B cell (primary cell): ENCODE measurements at regions of chr6 and their contacts with region 1.

Region 1: DNA sequence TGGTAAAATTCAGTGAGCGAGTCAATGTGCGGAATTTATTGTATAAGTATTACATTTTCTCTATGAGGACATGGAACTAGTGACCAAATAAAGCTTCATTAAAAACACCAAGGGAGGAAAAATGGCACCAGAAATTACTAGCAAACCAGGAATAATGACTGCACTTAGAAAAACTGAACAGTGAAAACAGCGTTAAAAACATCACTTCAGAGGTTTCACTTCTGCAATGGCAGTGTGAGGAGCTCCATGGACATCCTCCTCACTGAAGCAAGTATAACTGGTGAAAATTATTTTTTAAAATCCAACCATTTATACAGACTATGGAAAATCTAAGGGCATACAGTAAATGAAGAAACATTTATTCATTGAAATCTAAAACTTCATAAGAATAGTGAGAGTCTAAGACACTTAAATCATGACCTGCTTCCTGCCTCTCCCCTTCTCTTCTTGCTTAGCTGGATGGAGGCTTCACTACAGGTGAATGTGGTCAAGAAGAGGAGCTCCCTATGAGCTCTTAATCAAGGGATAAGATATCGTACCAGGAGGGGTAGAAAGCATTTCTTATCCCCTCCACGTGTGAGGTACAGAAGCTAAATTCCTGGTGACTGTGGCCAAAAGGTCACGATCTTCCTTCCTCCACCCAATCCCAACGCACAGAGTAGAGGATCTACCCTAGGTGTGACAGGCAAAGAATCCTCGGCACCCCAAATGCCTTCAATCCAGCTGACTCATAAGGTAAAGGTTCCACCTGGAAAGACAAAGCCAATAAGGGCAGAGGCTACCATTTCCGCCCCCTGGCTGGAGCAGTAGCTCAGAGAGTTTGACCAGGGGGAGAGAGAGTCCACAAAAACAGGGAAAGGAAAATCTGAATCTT is 12.3 kb upstream of the ASF1A start:
- DNase-seq: peak; percentile 55
- ATAC-seq: peak; percentile 68
- H3K4me3 ChIP-seq: peak overlapping the region in 1 of 5 experiments; percentile 10
- H3K4me3 Mint-ChIP-seq: peak overlapping the region; percentile 42
- H3K27ac ChIP-seq: peak overlapping the region in 1 of 2 donors; percentile 61
- H3K27ac Mint-ChIP-seq: peak overlapping the region; percentile 86
- H3K4me1 ChIP-seq: peaks cover 20 to 24% of the 10 kb centered on the region in 2 donors
- H3K4me1 Mint-ChIP-seq: peaks cover 55% of the 10 kb centered on the region
- H3K27me3 ChIP-seq: no peaks in the 10 kb centered on the region
- H3K27me3 Mint-ChIP-seq: no peaks in the 10 kb centered on the region
- CTCF ChIP-seq: no peak

Region 2: GRCh38 chr6:117265410-117266256 is 1616.0 kb before region 1 on chr6 and contains the start of gene VGLL2:
- CTCF ChIA-PET with region 1: no interaction called
- POLR2A ChIA-PET with region 1: no interaction called
- intact Hi-C with region 1: no loop called
- DNase-seq: peak; percentile 15
- ATAC-seq: no peak
- H3K4me3 ChIP-seq: peak within 1 kb of the TSS in 1 of 5 experiments; percentile 16
- H3K4me3 Mint-ChIP-seq: peak within 1 kb of the TSS; percentile 69
- H3K27ac ChIP-seq: no peak within 1 kb of the TSS
- H3K27ac Mint-ChIP-seq: no peak within 1 kb of the TSS
- H3K4me1 ChIP-seq: peaks cover 14 to 18% of the 10 kb centered on the region in 2 donors
- H3K4me1 Mint-ChIP-seq: peaks cover 16% of the 10 kb centered on the region
- H3K27me3 ChIP-seq: peaks cover 0 to 71% (median 50%) of the 10 kb centered on the region in 4 experiments
- H3K27me3 Mint-ChIP-seq: peaks cover 74% of the 10 kb centered on the region
- CTCF ChIP-seq: no peak
- total RNA-seq, gene VGLL2: not detected in 2 replicates

Region 3: DNA sequence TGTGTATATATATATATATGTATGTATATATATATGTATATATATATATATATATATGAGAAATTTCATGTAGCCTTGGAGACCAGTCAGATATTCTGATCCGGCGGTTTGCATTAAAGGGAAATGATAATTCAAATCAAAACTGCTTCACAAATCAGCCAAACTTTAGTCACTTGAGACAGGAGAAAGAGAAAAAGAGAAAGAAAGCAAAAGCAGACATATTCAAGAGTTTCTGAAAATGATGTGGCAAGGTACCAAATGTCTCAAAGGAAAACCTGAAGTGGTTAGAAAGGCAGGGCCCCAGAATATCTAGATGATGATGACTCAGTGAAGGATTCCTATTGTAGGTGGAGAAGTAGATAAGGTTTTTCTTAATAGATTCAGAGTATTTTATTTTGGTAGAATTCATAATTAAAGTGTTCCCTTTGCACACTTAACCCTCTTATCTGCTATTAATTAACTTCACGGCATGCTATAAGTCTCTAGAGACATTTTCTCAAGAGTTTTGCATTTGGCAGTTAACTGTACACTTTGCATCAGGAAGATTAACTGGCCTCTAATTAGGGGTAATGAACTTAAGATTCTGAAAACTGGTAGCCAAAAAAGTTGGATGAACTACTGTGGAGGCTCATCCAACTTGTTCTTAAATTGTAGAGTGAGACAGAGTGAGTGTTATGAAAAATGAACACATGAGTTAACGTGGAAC is 37.8 kb before region 1 on chr6:
- CTCF ChIA-PET with region 1: no interaction called
- POLR2A ChIA-PET with region 1: no interaction called
- intact Hi-C with region 1: loop called (anchors 5 kb)
- DNase-seq: no peak
- ATAC-seq: no peak
- H3K4me3 ChIP-seq: no peak overlapping the region
- H3K4me3 Mint-ChIP-seq: no peak overlapping the region
- H3K27ac ChIP-seq: no peak overlapping the region
- H3K27ac Mint-ChIP-seq: no peak overlapping the region
- H3K4me1 ChIP-seq: no peaks in the 10 kb centered on the region
- H3K4me1 Mint-ChIP-seq: peaks cover 24% of the 10 kb centered on the region
- H3K27me3 ChIP-seq: no peaks in the 10 kb centered on the region
- H3K27me3 Mint-ChIP-seq: no peaks in the 10 kb centered on the region
- CTCF ChIP-seq: no peak

Region 4: DNA sequence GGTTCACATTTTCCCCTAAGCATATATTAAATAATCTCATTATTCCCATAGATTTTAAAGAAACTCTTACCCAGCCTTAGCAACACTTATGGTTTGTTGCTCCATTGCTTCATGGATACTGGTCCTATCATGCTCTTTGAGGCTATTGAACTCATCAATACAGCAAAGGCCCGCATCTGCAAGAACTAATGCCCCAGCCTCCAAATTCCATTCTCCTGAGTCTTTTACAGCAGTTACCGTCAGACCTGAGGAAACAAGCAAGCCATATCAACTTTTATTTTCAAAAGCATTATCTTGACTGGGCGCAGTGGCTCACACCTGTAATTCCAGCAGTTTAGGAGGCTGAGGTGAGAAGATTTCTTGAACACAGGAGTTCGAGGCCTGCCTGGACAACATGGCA is 25.4 kb before region 1 on chr6:
- CTCF ChIA-PET with region 1: no interaction called
- POLR2A ChIA-PET with region 1: no interaction called
- intact Hi-C with region 1: no loop called
- DNase-seq: no peak
- ATAC-seq: no peak
- H3K4me3 ChIP-seq: no peak overlapping the region
- H3K4me3 Mint-ChIP-seq: no peak overlapping the region
- H3K27ac ChIP-seq: no peak overlapping the region
- H3K27ac Mint-ChIP-seq: no peak overlapping the region
- H3K4me1 ChIP-seq: peaks cover 0 to 3% of the 10 kb centered on the region in 2 donors
- H3K4me1 Mint-ChIP-seq: peaks cover 26% of the 10 kb centered on the region
- H3K27me3 ChIP-seq: no peaks in the 10 kb centered on the region
- H3K27me3 Mint-ChIP-seq: no peaks in the 10 kb centered on the region
- CTCF ChIP-seq: no peak

Region 5: DNA sequence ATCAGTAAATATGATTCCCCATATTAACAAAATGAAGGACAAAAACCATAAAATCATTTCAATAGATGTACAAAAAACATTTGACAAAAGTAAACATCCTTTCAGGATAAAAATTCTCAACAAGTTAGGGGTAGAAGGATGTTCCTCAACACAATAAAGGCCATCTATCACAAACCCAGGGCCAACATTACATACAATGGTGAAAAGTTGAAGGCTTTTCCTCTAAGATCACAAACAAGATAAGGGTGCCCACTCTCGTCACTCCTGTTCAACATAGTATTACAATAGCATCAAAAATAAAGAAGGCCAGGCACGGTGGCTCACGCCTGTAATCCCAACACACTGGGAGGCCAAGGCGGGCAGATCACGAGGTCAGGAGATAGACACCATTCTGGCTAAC is 10.3 kb before region 1 on chr6:
- CTCF ChIA-PET with region 1: no interaction called
- POLR2A ChIA-PET with region 1: no interaction called
- intact Hi-C with region 1: no loop called
- DNase-seq: no peak
- ATAC-seq: no peak
- H3K4me3 ChIP-seq: no peak overlapping the region
- H3K4me3 Mint-ChIP-seq: no peak overlapping the region
- H3K27ac ChIP-seq: no peak overlapping the region
- H3K27ac Mint-ChIP-seq: no peak overlapping the region
- H3K4me1 ChIP-seq: no peaks in the 10 kb centered on the region
- H3K4me1 Mint-ChIP-seq: peaks cover 36% of the 10 kb centered on the region
- H3K27me3 ChIP-seq: no peaks in the 10 kb centered on the region
- H3K27me3 Mint-ChIP-seq: no peaks in the 10 kb centered on the region
- CTCF ChIP-seq: no peak

Region 6: DNA sequence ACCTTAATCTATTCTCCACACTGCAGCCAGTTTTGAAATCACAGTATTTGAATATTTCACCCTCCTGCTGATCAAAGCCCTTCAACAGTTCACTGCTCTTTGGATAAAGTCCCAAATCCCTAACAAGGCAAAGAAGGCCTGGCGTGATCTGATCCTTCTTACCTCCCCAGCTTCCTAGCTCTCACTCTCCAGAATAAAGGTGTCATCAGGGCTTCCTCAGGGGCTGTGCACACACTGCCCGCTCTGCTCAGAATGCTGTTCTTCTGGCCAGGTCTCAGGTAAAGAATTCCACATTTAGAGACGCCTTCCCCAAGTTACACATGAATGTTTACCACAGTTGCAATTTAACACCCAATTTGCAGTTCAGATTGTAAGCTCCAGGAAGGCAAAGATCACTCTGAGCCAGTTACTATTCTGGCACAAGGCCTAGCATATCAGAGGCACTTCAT is 112.2 kb after region 1 on chr6:
- CTCF ChIA-PET with region 1: no interaction called
- POLR2A ChIA-PET with region 1: no interaction called
- intact Hi-C with region 1: no loop called
- DNase-seq: no peak
- ATAC-seq: no peak
- H3K4me3 ChIP-seq: no peak overlapping the region
- H3K4me3 Mint-ChIP-seq: no peak overlapping the region
- H3K27ac ChIP-seq: no peak overlapping the region
- H3K27ac Mint-ChIP-seq: no peak overlapping the region
- H3K4me1 ChIP-seq: no peaks in the 10 kb centered on the region
- H3K4me1 Mint-ChIP-seq: no peaks in the 10 kb centered on the region
- H3K27me3 ChIP-seq: peaks cover 0 to 3% (median 0%) of the 10 kb centered on the region in 4 experiments
- H3K27me3 Mint-ChIP-seq: no peaks in the 10 kb centered on the region
- CTCF ChIP-seq: no peak